Activated CD4-positive, alpha-beta T cell treated with anti-CD3 and anti-CD28 coated beads for 36 hours (primary cell): ENCODE measurements at regions of chr5 and their contacts with region 1.

Region 1: GRCh38 chr5:150789943-150790611 is 11.5 kb downstream of the SMIM3 start:
- DNase-seq: peak; percentile 88
- ATAC-seq: peak; percentile 98
- H3K4me3 Mint-ChIP-seq: peak overlapping the region; percentile 56
- H3K27ac Mint-ChIP-seq: peak overlapping the region; percentile 88
- H3K4me1 Mint-ChIP-seq: peaks cover 65% of the 10 kb centered on the region
- H3K27me3 Mint-ChIP-seq: no peaks in the 10 kb centered on the region

Region 2: GRCh38 chr5:150758531-150759333 is 31.3 kb before region 1 on chr5 and contains the start of gene DCTN4:
- CTCF ChIA-PET with region 1: interaction called, 8 read pairs
- POLR2A ChIA-PET with region 1: interaction called, 9 read pairs
- intact Hi-C with region 1: loop called (anchors 1 kb)
- DNase-seq: peak; percentile 96
- ATAC-seq: peak; percentile 96
- H3K4me3 Mint-ChIP-seq: no peak within 1 kb of the TSS
- H3K27ac Mint-ChIP-seq: no peak within 1 kb of the TSS
- H3K4me1 Mint-ChIP-seq: peaks cover 37% of the 10 kb centered on the region
- H3K27me3 Mint-ChIP-seq: no peaks in the 10 kb centered on the region
- total RNA-seq, gene DCTN4: 31.7 to 49.0 TPM

Region 3: DNA sequence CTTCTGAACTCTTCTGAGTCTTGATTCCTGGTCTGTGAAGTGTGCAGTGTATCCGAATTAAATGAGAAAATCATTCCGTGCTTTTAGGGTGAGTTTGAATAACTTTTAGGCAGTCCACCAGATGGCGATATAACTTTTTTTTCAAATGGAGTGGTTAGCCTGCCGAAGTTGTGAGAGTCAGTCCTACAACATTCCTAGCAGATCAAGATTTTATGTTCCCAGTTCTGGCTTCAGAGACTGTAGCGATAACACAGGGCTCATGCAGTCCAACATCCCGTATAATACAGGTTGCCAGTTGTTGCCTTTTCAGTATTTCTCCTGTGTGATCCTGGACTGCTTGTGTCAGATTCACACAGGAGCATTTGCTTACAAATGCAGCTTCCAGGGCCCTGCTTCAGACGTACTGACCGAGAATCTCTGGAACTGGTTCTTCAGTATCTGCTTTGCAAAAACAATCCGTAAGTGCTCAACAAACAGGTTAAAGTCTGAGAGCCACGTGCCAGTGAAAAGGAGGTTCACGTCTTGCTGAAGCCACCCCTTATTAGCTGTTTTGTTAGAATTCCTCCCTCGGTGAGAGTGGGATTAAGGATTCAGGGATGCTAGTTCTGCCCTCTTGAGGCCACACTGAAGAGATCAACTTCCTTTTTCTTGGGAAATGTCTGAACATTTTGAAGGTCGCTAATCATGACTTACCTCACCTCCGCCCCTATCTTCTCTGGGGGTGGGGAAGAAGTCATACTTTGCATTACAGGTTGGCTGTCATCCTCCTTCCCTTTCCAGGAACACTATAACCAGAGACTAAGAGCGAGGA is 11.2 kb after region 1 on chr5:
- CTCF ChIA-PET with region 1: interaction called, 17 read pairs
- POLR2A ChIA-PET with region 1: no interaction called
- intact Hi-C with region 1: no loop called
- DNase-seq: peak; percentile 26
- ATAC-seq: peak; percentile 78
- H3K4me3 Mint-ChIP-seq: no peak overlapping the region
- H3K27ac Mint-ChIP-seq: no peak overlapping the region
- H3K4me1 Mint-ChIP-seq: peaks cover 22% of the 10 kb centered on the region
- H3K27me3 Mint-ChIP-seq: no peaks in the 10 kb centered on the region

Region 4: DNA sequence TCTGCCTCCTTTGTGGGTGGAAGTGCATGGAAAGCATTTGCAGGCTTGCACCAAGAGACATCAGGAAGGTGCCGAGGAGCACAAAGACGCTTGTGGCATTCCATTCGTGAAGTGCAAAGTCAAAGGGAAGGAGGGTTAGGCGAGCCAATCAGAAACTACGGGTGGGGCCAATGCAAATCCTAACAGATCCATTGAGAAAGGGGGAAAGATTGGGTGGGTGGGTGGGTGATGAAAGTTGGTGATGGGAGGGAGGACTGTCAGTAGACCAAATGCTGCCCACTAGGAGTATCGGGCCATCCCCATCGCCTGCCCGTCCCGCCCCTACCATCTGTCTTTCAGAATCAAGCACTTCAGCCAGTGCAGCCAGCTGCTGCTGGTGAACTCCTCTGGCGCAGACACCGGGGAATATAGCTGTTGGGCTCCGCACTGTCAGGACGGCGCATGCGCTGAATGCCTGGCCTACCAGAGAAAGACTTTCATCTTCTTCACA is 384.6 kb after region 1 on chr5:
- CTCF ChIA-PET with region 1: no interaction called
- POLR2A ChIA-PET with region 1: no interaction called
- intact Hi-C with region 1: no loop called
- DNase-seq: no peak
- ATAC-seq: no peak
- H3K4me3 Mint-ChIP-seq: no peak overlapping the region
- H3K27ac Mint-ChIP-seq: no peak overlapping the region
- H3K4me1 Mint-ChIP-seq: peaks cover 6% of the 10 kb centered on the region
- H3K27me3 Mint-ChIP-seq: no peaks in the 10 kb centered on the region